ENCODE measurements at regions of chr3 and their contacts with region 1.

Region 1: GRCh38 chr3:157499342-157499963 is 3.8 kb downstream of the VEPH1 start:
- DNase-seq: peak; percentile 74 to 83
- H3K4me3 ChIP-seq: peak overlapping the region; percentile 48 to 55 (median 50)
- H3K27ac ChIP-seq: peak overlapping the region; percentile 79
- H3K4me1 ChIP-seq: peaks cover 4 to 21% (median 18%) of the 10 kb centered on the region in 4 experiments; a peak in 5 of 7 replicates
- H3K27me3 ChIP-seq: no peaks in the 10 kb centered on the region
- CTCF ChIP-seq: no peak
- EP300 ChIP-seq: peak in 1 of 2 experiments; percentile 65; a peak in 1 of 3 replicates
- POLR2A ChIP-seq: peak in 1 of 2 experiments; percentile 91; a peak in 2 of 3 replicates
- RAD21 ChIP-seq: peak in 1 of 2 experiments; percentile 6; a peak in 2 of 4 replicates

Region 2: GRCh38 chr3:157436583-157437291 is 62.7 kb before region 1 on chr3 and contains the start of gene PTX3:
- CTCF ChIA-PET with region 1: interaction called, 4 read pairs
- POLR2A ChIA-PET with region 1: interaction called, 14 read pairs
- DNase-seq: no peak
- H3K4me3 ChIP-seq: peak within 1 kb of the TSS; percentile 60 to 86 (median 80)
- H3K27ac ChIP-seq: no peak within 1 kb of the TSS
- H3K4me1 ChIP-seq: peaks cover 1 to 5% (median 4%) of the 10 kb centered on the region in 4 experiments; a peak in 4 of 7 replicates
- H3K27me3 ChIP-seq: peaks cover 0 to 11% (median 6%) of the 10 kb centered on the region in 4 experiments; a peak in 4 of 7 replicates
- CTCF ChIP-seq: no peak
- EP300 ChIP-seq: no peak
- POLR2A ChIP-seq: no peak; a peak in 1 of 3 replicates
- RAD21 ChIP-seq: no peak
- total RNA-seq, gene PTX3: 1.2 and 1.4 TPM in 2 replicates

Region 3: DNA sequence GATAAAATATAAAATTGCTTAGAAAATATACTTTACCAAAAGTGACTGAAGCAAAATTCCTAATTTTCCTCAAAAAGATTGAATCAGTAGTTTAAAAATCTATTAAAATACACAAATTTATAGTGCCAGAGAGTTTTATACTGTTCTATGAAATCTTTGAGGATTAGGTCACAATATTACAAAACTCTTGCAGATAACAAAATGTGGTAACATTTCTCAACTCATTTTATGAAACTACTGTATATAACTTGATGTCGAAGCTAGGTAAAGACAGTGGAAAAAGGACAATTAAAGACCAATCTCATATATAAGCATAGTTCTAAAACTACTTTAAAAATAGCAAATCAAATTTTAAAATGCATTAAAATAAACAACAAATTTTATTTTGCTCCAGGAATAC is 12.1 kb before region 1 on chr3:
- CTCF ChIA-PET with region 1: interaction called, 9 read pairs
- POLR2A ChIA-PET with region 1: interaction called, 13 read pairs
- DNase-seq: no peak
- H3K4me3 ChIP-seq: no peak overlapping the region
- H3K27ac ChIP-seq: no peak overlapping the region
- H3K4me1 ChIP-seq: no peaks in the 10 kb centered on the region
- H3K27me3 ChIP-seq: no peaks in the 10 kb centered on the region
- CTCF ChIP-seq: no peak
- EP300 ChIP-seq: no peak
- POLR2A ChIP-seq: no peak
- RAD21 ChIP-seq: no peak

Region 4: DNA sequence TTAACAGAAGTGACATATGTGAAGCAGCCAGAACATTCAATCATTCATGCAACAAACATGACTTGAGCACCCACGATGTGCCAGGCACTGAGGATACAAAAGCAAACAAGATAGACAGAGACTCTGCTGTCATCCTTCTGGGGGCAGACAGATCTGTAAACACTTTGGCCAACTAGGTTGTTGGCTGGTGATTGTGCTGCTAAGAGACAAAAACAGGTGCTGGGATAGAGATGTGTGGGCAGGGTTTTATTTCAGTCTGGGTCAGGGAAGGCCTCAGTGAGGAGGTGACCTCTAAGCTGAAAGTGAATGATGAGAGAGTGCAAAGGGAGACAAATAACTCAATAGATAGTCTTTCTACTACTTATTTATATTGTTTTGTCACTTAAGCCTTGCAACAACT is 150.7 kb after region 1 on chr3:
- CTCF ChIA-PET with region 1: no interaction called
- POLR2A ChIA-PET with region 1: no interaction called
- DNase-seq: no peak
- H3K4me3 ChIP-seq: no peak overlapping the region
- H3K27ac ChIP-seq: no peak overlapping the region
- H3K4me1 ChIP-seq: no peaks in the 10 kb centered on the region
- H3K27me3 ChIP-seq: no peaks in the 10 kb centered on the region
- CTCF ChIP-seq: no peak
- EP300 ChIP-seq: no peak
- POLR2A ChIP-seq: no peak
- RAD21 ChIP-seq: no peak

Measured in H1 (cell line).